Heart right ventricle (tissue), 16 donors: ENCODE measurements at regions of chr1 and their contacts with region 1.

Region 1: GRCh38 chr1:53182111-53182593 is 14.5 kb upstream of the CPT2 start:
- DNase-seq: peak; percentile 79 to 81
- ATAC-seq: peak in 7 of 8 donors; percentile 50 to 84 (median 73)
- H3K4me3 ChIP-seq: no peak overlapping the region
- H3K27ac ChIP-seq: peak overlapping the region in 3 of 10 donors; percentile 3 to 36 (median 33)
- H3K4me1 ChIP-seq: peaks cover 0 to 24% (median 4%) of the 10 kb centered on the region in 9 donors
- H3K27me3 ChIP-seq: no peaks in the 10 kb centered on the region
- CTCF ChIP-seq: peak; percentile 85 to 94 (median 91)

Region 2: DNA sequence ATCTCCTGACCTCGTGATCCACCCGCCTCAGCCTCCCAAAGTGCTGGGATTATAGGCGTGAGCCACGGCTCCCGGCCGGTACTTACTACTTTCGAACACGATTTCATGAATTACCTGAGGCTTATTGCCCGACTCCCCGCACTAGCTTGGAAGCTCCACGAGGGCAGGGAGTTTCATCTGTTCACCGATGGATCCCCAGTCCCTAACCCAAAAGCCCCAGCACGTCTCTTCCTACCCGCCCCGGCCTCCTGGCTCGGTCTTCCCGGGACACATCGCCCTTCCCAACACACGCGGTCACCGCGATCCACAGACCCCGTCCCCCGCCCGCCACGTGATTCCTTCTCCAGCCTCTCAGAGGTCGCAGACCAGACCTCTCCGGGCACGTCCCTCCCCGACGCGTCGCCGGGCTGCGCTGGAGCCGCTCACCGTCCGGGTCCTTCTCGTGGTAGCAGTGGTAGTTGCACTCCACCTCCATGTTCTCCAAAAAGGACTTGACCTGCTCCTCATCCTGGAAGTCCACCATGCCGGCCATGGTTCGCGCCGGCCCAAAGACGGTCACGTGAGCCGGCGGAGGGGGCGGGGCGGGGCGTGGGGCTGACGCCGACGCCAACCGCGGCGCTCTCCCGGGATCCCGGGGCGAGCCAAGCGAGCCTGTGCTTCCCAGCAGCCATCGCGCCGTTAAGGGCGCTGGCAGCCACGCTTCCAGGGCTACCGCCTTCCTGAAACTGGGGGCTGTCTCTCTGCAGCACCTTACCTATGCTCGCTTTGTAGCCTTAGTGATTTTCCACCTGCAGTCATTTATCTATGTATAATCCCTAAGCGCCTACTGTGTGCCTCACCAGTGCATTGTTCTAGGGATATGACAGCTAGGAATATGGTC is 484.1 kb before region 1 on chr1 and contains the start of gene COA7:
- intact Hi-C with region 1: loop called in 3 of 10 experiments (anchors 10 kb)
- DNase-seq: peak; percentile 86 to 91
- ATAC-seq: peak; percentile 90 to 94 (median 92)
- H3K4me3 ChIP-seq: peak within 1 kb of the TSS; percentile 54 to 86 (median 72)
- H3K27ac ChIP-seq: peak within 1 kb of the TSS; percentile 73 to 90 (median 83)
- H3K4me1 ChIP-seq: peaks cover 0 to 29% (median 6%) of the 10 kb centered on the region in 9 donors
- H3K27me3 ChIP-seq: no peaks in the 10 kb centered on the region
- CTCF ChIP-seq: peak in 2 of 9 donors; percentile 6
- total RNA-seq, gene COA7: 9.7 to 22.4 (median 16.0) TPM

Region 3: GRCh38 chr1:52904927-52905698 is 277.0 kb before region 1 on chr1:
- intact Hi-C with region 1: loop called in 5 of 10 experiments (anchors 10 kb)
- DNase-seq: peak in 1 of 2 donors; percentile 49
- ATAC-seq: peak; percentile 80 to 97 (median 94)
- H3K4me3 ChIP-seq: no peak overlapping the region
- H3K27ac ChIP-seq: peak overlapping the region; percentile 26 to 90 (median 80)
- H3K4me1 ChIP-seq: peaks cover 5 to 29% (median 18%) of the 10 kb centered on the region in 9 donors
- H3K27me3 ChIP-seq: no peaks in the 10 kb centered on the region
- CTCF ChIP-seq: peak in 7 of 9 donors; percentile 30 to 50 (median 35)

Region 4: GRCh38 chr1:52927212-52928014 is 254.7 kb before region 1 on chr1 and contains the start of gene SCP2:
- intact Hi-C with region 1: loop called in 2 of 10 experiments (anchors 10 kb)
- DNase-seq: peak; percentile 86 to 90
- ATAC-seq: peak; percentile 94 to 97 (median 96)
- H3K4me3 ChIP-seq: peak within 1 kb of the TSS; percentile 55 to 85 (median 78)
- H3K27ac ChIP-seq: peak within 1 kb of the TSS; percentile 76 to 90 (median 87)
- H3K4me1 ChIP-seq: peaks cover 5 to 30% (median 23%) of the 10 kb centered on the region in 9 donors
- H3K27me3 ChIP-seq: peaks cover 0 to 2% (median 0%) of the 10 kb centered on the region in 7 donors
- CTCF ChIP-seq: no peak
- total RNA-seq, gene SCP2: 117 to 149 (median 133) TPM

Region 5: GRCh38 chr1:52955129-52955970 is 226.8 kb before region 1 on chr1:
- intact Hi-C with region 1: no loop called
- DNase-seq: no peak
- ATAC-seq: no peak
- H3K4me3 ChIP-seq: no peak overlapping the region
- H3K27ac ChIP-seq: no peak overlapping the region
- H3K4me1 ChIP-seq: peaks cover 0 to 4% (median 0%) of the 10 kb centered on the region in 9 donors
- H3K27me3 ChIP-seq: no peaks in the 10 kb centered on the region
- CTCF ChIP-seq: no peak

Region 6: DNA sequence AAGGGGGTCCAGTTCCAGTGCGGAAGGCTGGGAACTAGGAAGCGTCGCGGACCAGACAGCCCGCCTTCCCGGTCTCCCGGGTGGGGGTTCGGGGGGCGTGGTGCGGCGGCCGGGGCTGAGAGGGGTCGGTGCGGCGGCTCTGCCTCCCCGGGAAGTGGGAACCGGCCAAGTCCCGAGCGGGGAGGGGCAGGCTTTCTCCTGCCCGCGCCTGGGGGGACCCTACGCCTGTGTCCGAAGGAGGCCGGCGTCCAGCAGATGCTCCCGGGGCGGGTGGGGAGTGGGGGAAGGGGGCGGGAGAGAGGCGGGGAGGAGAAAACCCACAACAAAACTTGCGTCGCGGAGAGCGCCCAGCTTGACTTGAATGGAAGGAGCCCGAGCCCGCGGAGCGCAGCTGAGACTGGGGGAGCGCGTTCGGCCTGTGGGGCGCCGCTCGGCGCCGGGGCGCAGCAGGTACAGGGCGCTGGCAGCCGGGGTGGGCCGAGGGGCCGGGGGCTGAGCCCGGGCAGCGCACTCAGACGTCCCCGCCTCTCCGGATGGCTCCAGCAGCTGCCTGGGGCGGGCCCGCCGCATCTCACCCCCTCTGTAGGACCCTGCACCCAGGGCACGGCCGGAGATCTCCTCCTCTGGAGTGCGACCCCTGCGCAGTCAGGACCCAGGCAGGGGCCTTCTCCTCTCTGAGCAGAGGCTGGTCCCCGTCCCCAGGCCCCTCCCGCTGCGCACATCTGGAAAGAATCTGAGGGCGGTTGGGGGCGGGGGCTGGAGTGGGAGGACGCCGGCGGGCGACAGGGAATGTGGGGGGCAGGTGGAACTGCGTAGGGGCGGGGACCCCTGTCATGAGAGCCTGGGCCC is 120.1 kb before region 1 on chr1 and contains the start of gene PODN:
- intact Hi-C with region 1: loop called in 2 of 10 experiments (anchors 5 to 10 kb)
- DNase-seq: peak in 1 of 2 donors; percentile 59
- ATAC-seq: peak; percentile 20 to 60 (median 46)
- H3K4me3 ChIP-seq: peak within 1 kb of the TSS; percentile 31 to 91 (median 66)
- H3K27ac ChIP-seq: peak within 1 kb of the TSS; percentile 36 to 92 (median 78)
- H3K4me1 ChIP-seq: peaks cover 0 to 42% (median 22%) of the 10 kb centered on the region in 9 donors
- H3K27me3 ChIP-seq: peaks cover 0 to 40% (median 8%) of the 10 kb centered on the region in 7 donors
- CTCF ChIP-seq: no peak
- total RNA-seq, gene PODN: 11.2 to 27.4 (median 15.4) TPM